PC-9 (cell line): ENCODE measurements at regions of chr2 and their contacts with region 1.

Region 1: GRCh38 chr2:55168221-55169154 is 63.6 kb downstream of the CLHC1 start:
- DNase-seq: peak; percentile 41 to 68
- H3K4me3 ChIP-seq: no peak overlapping the region
- H3K27ac ChIP-seq: no peak overlapping the region
- H3K4me1 ChIP-seq: peaks cover 52% of the 10 kb centered on the region
- H3K27me3 ChIP-seq: no peaks in the 10 kb centered on the region
- CTCF ChIP-seq: peak; percentile 92

Region 2: GRCh38 chr2:54106631-54107454 is 1061.6 kb before region 1 on chr2:
- CTCF ChIA-PET with region 1: no interaction called
- POLR2A ChIA-PET with region 1: no interaction called
- intact Hi-C with region 1: loop called (anchors 5 kb)
- DNase-seq: peak; percentile 51 to 63
- H3K4me3 ChIP-seq: no peak overlapping the region
- H3K27ac ChIP-seq: no peak overlapping the region
- H3K4me1 ChIP-seq: peaks cover 21% of the 10 kb centered on the region
- H3K27me3 ChIP-seq: no peaks in the 10 kb centered on the region
- CTCF ChIP-seq: peak; percentile 88

Region 3: GRCh38 chr2:54879598-54880332 is 288.7 kb before region 1 on chr2:
- CTCF ChIA-PET with region 1: no interaction called
- POLR2A ChIA-PET with region 1: interaction called, 15 read pairs
- intact Hi-C with region 1: no loop called
- DNase-seq: no peak
- H3K4me3 ChIP-seq: no peak overlapping the region
- H3K27ac ChIP-seq: no peak overlapping the region
- H3K4me1 ChIP-seq: no peaks in the 10 kb centered on the region
- H3K27me3 ChIP-seq: no peaks in the 10 kb centered on the region
- CTCF ChIP-seq: no peak

Region 4: GRCh38 chr2:54942373-54942772 is 226.1 kb before region 1 on chr2:
- CTCF ChIA-PET with region 1: interaction called, 11 read pairs
- POLR2A ChIA-PET with region 1: no interaction called
- intact Hi-C with region 1: no loop called
- DNase-seq: no peak
- H3K4me3 ChIP-seq: no peak overlapping the region
- H3K27ac ChIP-seq: no peak overlapping the region
- H3K4me1 ChIP-seq: peaks cover 18% of the 10 kb centered on the region
- H3K27me3 ChIP-seq: no peaks in the 10 kb centered on the region
- CTCF ChIP-seq: no peak

Region 5: DNA sequence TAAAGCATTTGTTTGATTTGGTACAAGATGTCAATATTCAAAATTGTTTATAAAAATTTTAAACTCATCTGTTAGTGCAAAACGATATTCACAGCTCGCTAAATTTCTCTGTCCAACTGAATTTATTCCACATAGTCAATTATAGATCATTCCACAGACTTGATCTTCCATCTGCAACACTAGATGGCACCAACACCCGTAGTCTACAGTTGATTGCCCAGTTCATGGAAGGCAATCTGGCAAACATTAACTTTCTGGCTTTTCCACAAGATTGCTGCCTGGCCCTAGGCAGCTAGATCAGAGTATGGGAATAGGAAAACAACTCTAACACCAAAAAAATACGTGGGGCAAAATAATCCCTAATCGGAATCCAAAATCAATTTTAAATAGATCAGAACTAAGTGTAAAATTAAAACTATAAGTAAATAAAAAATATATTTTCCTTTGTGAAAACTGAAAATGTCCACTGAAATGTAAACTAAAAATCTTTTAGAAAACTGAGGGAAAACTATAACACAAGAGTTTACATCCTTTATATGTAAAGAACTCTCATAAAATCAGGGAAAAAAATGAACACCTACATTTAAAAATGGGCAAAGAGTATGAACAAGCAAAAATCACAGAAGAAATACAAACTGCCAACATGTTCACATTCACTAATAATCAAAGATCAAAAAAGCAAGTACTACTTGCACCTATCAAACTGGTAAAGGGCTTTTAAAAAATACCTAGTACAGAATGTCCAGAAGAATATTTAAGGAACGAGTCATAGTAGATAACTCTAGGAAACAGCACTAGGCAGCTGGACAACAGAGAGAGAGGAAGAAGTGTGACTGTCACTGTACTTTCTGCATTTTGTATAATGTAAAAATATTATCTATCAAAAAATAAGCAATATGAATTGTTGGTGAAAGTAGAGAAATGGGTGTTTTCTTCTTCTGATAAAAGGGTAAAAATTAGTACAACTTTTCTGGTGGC is 153.2 kb before region 1 on chr2:
- CTCF ChIA-PET with region 1: interaction called, 6 read pairs
- POLR2A ChIA-PET with region 1: no interaction called
- intact Hi-C with region 1: loop called (anchors 1 kb)
- DNase-seq: peak; percentile 40 to 76
- H3K4me3 ChIP-seq: peak overlapping the region; percentile 9
- H3K27ac ChIP-seq: peak overlapping the region; percentile 35
- H3K4me1 ChIP-seq: peaks cover 89% of the 10 kb centered on the region
- H3K27me3 ChIP-seq: no peaks in the 10 kb centered on the region
- CTCF ChIP-seq: peak; percentile 83

Region 6: DNA sequence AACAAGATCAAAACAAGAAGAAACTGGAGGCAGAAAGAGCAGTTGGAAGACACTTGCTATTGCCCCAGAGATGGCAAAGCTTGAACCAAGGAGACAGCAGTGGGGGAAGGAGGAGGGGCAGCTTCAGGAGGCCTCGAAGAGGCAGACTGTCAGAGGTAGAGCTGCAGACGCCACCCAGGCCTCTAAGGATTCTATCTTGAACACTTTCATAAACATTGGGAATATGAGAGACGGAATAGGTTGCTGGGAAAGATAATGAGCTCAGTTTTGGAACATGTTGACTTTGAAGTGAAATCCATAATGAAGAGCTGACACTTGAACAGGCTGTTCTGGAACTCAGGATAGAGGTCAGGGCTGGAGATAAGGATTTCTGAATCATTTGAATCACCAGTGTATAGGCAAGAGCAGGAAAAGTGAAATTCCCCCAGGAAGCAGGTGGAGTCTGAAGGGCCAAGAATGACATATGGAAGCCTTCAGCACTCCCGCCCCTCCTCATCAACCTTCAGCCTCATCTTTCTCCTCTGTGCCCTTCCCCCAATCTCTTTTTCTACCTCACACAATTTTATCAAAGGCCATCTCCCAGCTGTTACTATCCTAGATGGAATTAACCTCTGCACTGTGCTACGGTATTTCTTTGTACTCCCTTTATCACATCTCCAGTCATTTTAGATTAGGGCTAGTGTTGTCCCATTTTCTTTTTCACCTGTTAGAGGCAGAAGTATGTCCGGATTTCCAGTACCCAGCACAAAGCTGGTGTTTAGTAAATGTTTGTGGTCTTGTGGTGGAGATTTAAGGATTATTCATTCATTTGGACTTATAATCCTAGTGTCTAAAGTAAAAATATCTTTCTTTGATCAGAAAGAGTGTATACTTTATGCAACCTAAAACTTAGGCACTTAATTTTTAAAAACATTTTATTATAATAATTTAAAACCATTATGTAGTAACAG is 70.8 kb before region 1 on chr2:
- CTCF ChIA-PET with region 1: interaction called, 3 read pairs
- POLR2A ChIA-PET with region 1: no interaction called
- intact Hi-C with region 1: loop called (anchors 2 kb)
- DNase-seq: peak; percentile 33 to 79
- H3K4me3 ChIP-seq: no peak overlapping the region; the same call in 1 of the 2 replicates
- H3K27ac ChIP-seq: peak overlapping the region; percentile 98
- H3K4me1 ChIP-seq: peaks cover 100% of the 10 kb centered on the region
- H3K27me3 ChIP-seq: no peaks in the 10 kb centered on the region
- CTCF ChIP-seq: no peak